B cell (primary cell): ENCODE measurements at regions of chr17 and their contacts with region 1.

Region 1: DNA sequence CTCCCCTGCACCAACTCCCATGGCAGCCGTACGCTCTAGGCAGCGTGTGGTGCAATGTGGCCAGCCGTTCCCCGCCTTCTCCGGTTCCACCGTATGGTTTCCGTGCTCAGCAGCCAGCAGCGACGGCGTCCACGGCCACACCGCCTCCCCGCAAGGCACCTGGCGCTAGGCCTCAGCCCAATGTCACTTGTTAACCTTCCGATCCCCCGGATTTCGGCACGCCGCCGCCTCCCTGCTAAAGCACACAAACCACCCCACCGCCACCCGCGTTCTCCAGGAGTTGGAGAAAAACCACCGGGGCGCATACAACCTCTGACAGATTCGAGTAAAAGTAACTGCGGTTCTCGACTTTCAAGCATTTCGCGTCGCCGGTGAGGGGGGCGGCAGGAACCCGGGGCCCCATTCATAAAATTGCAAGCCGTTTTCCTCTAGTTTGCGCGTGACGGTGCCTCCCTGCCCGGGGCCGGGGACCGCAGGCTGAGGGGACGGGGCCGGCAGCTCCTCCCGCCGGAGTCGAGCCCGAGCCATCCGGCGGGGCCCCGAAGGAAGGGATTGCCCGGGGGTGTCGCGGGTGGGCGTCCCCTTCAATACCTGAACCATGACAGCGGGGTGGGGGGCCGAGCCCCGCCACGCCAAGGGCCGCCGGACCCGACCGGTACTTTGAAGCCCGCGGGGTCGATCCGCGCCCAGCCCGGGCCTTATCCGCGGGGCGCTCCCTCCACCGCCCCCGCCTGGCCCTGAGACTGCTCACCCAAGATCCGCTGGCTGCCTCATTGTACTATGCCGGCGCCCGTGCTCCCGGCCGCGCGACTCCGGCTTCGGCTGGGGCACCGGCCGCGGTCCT is at the start of gene TEX2:
- DNase-seq: peak; percentile 67
- ATAC-seq: peak; percentile 25
- H3K4me3 ChIP-seq: peak within 1 kb of the TSS; percentile 54 to 89 (median 74)
- H3K4me3 Mint-ChIP-seq: peak within 1 kb of the TSS; percentile 92
- H3K27ac ChIP-seq: peak within 1 kb of the TSS; percentile 48 to 68
- H3K27ac Mint-ChIP-seq: peak within 1 kb of the TSS; percentile 90
- H3K4me1 ChIP-seq: peaks cover 10 to 22% of the 10 kb centered on the region in 2 donors
- H3K4me1 Mint-ChIP-seq: peaks cover 28% of the 10 kb centered on the region
- H3K27me3 ChIP-seq: peaks cover 0 to 6% (median 0%) of the 10 kb centered on the region in 4 experiments
- H3K27me3 Mint-ChIP-seq: peaks cover 6% of the 10 kb centered on the region
- CTCF ChIP-seq: no peak
- total RNA-seq, gene TEX2: 6.9 and 7.6 TPM in 2 replicates

Region 2: GRCh38 chr17:62968445-62968923 is 1294.2 kb before region 1 on chr17:
- CTCF ChIA-PET with region 1: no interaction called
- POLR2A ChIA-PET with region 1: no interaction called
- intact Hi-C with region 1: loop called (anchors 10 kb)
- DNase-seq: peak; percentile 83
- ATAC-seq: peak; percentile 39
- H3K4me3 ChIP-seq: no peak overlapping the region
- H3K4me3 Mint-ChIP-seq: peak overlapping the region; percentile 74
- H3K27ac ChIP-seq: no peak overlapping the region
- H3K27ac Mint-ChIP-seq: peak overlapping the region; percentile 48
- H3K4me1 ChIP-seq: peaks cover 18 to 20% of the 10 kb centered on the region in 2 donors
- H3K4me1 Mint-ChIP-seq: peaks cover 21% of the 10 kb centered on the region
- H3K27me3 ChIP-seq: no peaks in the 10 kb centered on the region
- H3K27me3 Mint-ChIP-seq: no peaks in the 10 kb centered on the region
- CTCF ChIP-seq: peak; percentile 85

Region 3: GRCh38 chr17:64216338-64217248 is 46.0 kb before region 1 on chr17:
- CTCF ChIA-PET with region 1: no interaction called
- POLR2A ChIA-PET with region 1: no interaction called
- intact Hi-C with region 1: loop called (anchors 1 kb)
- DNase-seq: peak; percentile 60
- ATAC-seq: peak; percentile 77
- H3K4me3 ChIP-seq: no peak overlapping the region
- H3K4me3 Mint-ChIP-seq: peak overlapping the region; percentile 46
- H3K27ac ChIP-seq: peak overlapping the region; percentile 60 to 84
- H3K27ac Mint-ChIP-seq: peak overlapping the region; percentile 85
- H3K4me1 ChIP-seq: peaks cover 27 to 31% of the 10 kb centered on the region in 2 donors
- H3K4me1 Mint-ChIP-seq: peaks cover 34% of the 10 kb centered on the region
- H3K27me3 ChIP-seq: no peaks in the 10 kb centered on the region
- H3K27me3 Mint-ChIP-seq: no peaks in the 10 kb centered on the region
- CTCF ChIP-seq: no peak

Region 4: GRCh38 chr17:64984851-64985521 is 722.3 kb after region 1 on chr17:
- CTCF ChIA-PET with region 1: no interaction called
- POLR2A ChIA-PET with region 1: no interaction called
- intact Hi-C with region 1: loop called (anchors 5 kb)
- DNase-seq: peak; percentile 44
- ATAC-seq: no peak
- H3K4me3 ChIP-seq: peak overlapping the region in 1 of 5 experiments; percentile 50
- H3K4me3 Mint-ChIP-seq: peak overlapping the region; percentile 81
- H3K27ac ChIP-seq: peak overlapping the region; percentile 99 to 100
- H3K27ac Mint-ChIP-seq: peak overlapping the region; percentile 99
- H3K4me1 ChIP-seq: peaks cover 33 to 49% of the 10 kb centered on the region in 2 donors
- H3K4me1 Mint-ChIP-seq: peaks cover 51% of the 10 kb centered on the region
- H3K27me3 ChIP-seq: no peaks in the 10 kb centered on the region
- H3K27me3 Mint-ChIP-seq: no peaks in the 10 kb centered on the region
- CTCF ChIP-seq: no peak